Activated CD4-positive, alpha-beta memory T cell treated with anti-CD3 and anti-CD28 coated beads for 36 hours (primary cell): ENCODE measurements at regions of chr19 and their contacts with region 1.

Region 1: GRCh38 chr19:49877020-49877878 is at the starts of genes AKT1S1 and TBC1D17:
- DNase-seq: peak; percentile 99
- H3K4me3 Mint-ChIP-seq: no peak within 1 kb of the TSS
- H3K27ac Mint-ChIP-seq: no peak within 1 kb of the TSS
- H3K4me1 Mint-ChIP-seq: peaks cover 26% of the 10 kb centered on the region
- H3K27me3 Mint-ChIP-seq: no peaks in the 10 kb centered on the region
- total RNA-seq, gene AKT1S1: 19.6 TPM
- total RNA-seq, gene TBC1D17: 32.5 to 34.7 TPM

Region 2: DNA sequence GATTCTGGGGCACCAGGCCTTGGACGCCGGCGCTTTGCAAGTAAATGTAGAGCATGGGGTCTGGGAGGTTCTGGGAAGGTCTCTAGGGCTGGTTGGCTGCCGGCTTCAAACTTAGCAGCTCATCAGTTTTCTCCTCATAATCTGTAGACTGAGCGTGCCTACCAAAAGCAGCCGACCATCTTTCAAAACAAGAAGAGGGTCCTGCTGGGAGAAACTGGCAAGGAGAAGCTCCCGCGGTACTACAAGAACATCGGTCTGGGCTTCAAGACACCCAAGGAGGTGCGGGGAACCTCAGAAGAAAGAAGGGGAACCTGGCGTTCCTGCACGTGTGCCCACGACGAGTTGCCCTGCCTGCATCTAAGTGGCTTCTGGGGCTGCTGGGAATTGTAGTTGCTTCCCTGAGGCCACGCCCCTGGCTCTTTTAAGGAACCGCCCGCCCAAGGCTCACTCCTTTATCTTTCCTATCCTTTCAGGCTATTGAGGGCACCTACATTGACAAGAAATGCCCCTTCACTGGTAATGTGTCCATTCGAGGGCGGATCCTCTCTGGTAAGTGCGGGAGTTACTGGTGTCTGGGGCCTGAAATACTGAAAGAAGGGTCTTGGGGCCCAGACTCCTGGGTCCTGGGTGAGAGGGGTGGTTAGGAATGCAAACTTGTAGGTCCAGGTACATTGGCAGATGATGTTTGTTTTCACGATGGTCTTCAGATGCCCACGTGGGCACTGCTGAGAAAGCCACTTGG is 380.0 kb before region 1 on chr19:
- CTCF ChIA-PET with region 1: no interaction called
- POLR2A ChIA-PET with region 1: no interaction called
- intact Hi-C with region 1: loop called (anchors 5 kb)
- DNase-seq: peak; percentile 83
- H3K4me3 Mint-ChIP-seq: peak overlapping the region; percentile 92
- H3K27ac Mint-ChIP-seq: peak overlapping the region; percentile 97
- H3K4me1 Mint-ChIP-seq: peaks cover 49% of the 10 kb centered on the region
- H3K27me3 Mint-ChIP-seq: no peaks in the 10 kb centered on the region

Region 3: GRCh38 chr19:49817964-49818648 is 59.1 kb before region 1 on chr19 and contains the start of gene MED25:
- CTCF ChIA-PET with region 1: no interaction called
- POLR2A ChIA-PET with region 1: no interaction called
- intact Hi-C with region 1: loop called (anchors 1 kb)
- DNase-seq: peak; percentile 91
- H3K4me3 Mint-ChIP-seq: peak within 1 kb of the TSS; percentile 93
- H3K27ac Mint-ChIP-seq: peak within 1 kb of the TSS; percentile 98
- H3K4me1 Mint-ChIP-seq: peaks cover 19% of the 10 kb centered on the region
- H3K27me3 Mint-ChIP-seq: no peaks in the 10 kb centered on the region
- total RNA-seq, gene MED25: 45.6 to 50.2 TPM

Region 4: DNA sequence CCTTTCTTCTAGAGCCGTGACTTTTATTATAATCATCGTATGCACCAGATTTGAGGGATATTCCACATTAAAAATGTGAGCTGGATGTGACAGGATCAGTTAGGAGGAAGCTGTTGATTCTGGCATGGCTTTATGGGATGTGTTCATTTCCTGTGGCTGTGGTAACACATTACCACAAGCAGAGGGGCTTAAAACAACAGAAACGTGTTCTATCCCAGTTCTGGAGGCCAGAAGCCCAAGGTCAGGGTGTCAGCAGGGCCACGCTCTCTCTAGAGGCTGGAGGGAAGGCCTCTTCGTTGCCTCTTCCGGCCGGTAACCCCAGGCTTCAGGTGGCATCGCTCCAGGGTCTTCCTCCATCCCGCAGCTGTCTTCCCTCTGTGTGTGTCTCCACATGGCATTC is 44.7 kb before region 1 on chr19:
- CTCF ChIA-PET with region 1: no interaction called
- POLR2A ChIA-PET with region 1: no interaction called
- intact Hi-C with region 1: no loop called
- DNase-seq: no peak
- H3K4me3 Mint-ChIP-seq: no peak overlapping the region
- H3K27ac Mint-ChIP-seq: no peak overlapping the region
- H3K4me1 Mint-ChIP-seq: no peaks in the 10 kb centered on the region
- H3K27me3 Mint-ChIP-seq: no peaks in the 10 kb centered on the region

Region 5: GRCh38 chr19:49896863-49897621 is 19.8 kb after region 1 on chr19 and contains the start of gene IL4I1:
- CTCF ChIA-PET with region 1: no interaction called
- POLR2A ChIA-PET with region 1: interaction called, 14 read pairs
- intact Hi-C with region 1: loop called (anchors 1 kb)
- DNase-seq: peak; percentile 87
- H3K4me3 Mint-ChIP-seq: peak within 1 kb of the TSS; percentile 87
- H3K27ac Mint-ChIP-seq: peak within 1 kb of the TSS; percentile 100
- H3K4me1 Mint-ChIP-seq: peaks cover 62% of the 10 kb centered on the region
- H3K27me3 Mint-ChIP-seq: no peaks in the 10 kb centered on the region
- total RNA-seq, gene IL4I1: 108 to 111 TPM